Heart right ventricle (tissue), 16 donors: ENCODE measurements at regions of chr4 and their contacts with region 1.

Region 1: DNA sequence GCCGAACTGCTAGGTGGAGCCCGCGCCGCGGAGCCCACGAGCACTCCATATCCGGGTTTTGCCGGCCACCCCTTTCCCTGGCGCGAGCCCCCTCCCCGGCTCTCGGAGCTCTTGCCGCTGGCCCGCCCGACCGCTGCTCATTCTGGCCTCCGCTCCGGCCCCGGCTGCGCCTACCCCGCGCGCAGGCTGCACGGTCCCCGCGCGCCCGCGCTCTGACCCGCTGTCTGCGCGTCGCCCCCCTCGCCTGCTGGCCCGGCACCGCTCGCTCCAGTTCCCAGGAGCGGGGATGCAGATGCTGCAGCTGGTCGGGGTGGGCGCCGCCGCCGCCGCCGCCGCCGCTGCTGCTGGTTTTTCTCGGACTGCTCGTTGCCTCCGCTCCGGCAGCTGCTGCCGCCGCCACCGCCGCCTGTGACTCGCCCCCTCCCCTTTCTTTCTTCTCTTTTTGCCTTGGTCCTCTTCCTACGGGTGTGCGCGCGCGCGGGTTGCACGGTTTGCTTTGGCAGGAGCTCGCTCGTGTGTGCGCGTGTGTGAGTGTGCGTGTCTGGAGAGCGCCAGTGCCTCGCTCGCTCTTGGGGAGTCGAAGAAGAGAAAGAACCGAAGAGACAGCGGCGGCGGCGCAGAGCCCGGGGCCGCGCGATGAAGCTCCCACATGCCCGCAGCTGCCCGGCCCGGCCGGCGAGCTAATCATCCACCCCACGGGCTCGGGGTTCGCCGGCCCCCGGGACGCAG is at the start of gene ADGRL3:
- DNase-seq: peak; percentile 28 to 41
- ATAC-seq: peak; percentile 31 to 76 (median 61)
- H3K4me3 ChIP-seq: peak within 1 kb of the TSS; percentile 42 to 75 (median 64)
- H3K27ac ChIP-seq: peak within 1 kb of the TSS in 9 of 10 donors; percentile 45 to 69 (median 49)
- H3K4me1 ChIP-seq: peaks cover 0 to 25% (median 5%) of the 10 kb centered on the region in 9 donors
- H3K27me3 ChIP-seq: peaks cover 0 to 65% (median 38%) of the 10 kb centered on the region in 7 donors
- CTCF ChIP-seq: no peak
- total RNA-seq, gene ADGRL3: 2.5 to 20.9 (median 5.8) TPM

Region 2: GRCh38 chr4:59656020-59656471 is 1544.3 kb before region 1 on chr4:
- intact Hi-C with region 1: no loop called
- DNase-seq: no peak
- ATAC-seq: no peak
- H3K4me3 ChIP-seq: no peak overlapping the region
- H3K27ac ChIP-seq: no peak overlapping the region
- H3K4me1 ChIP-seq: no peaks in the 10 kb centered on the region
- H3K27me3 ChIP-seq: no peaks in the 10 kb centered on the region
- CTCF ChIP-seq: no peak

Region 3: GRCh38 chr4:61273233-61273632 is 72.9 kb after region 1 on chr4:
- intact Hi-C with region 1: loop called in 1 of 10 experiments (anchors 10 kb)
- DNase-seq: no peak
- ATAC-seq: peak in 6 of 8 donors; percentile 64 to 87 (median 80)
- H3K4me3 ChIP-seq: no peak overlapping the region
- H3K27ac ChIP-seq: peak overlapping the region in 2 of 10 donors; percentile 50 to 51
- H3K4me1 ChIP-seq: peaks cover 0 to 16% (median 0%) of the 10 kb centered on the region in 9 donors
- H3K27me3 ChIP-seq: no peaks in the 10 kb centered on the region
- CTCF ChIP-seq: no peak